ENCODE measurements at regions of chr3 and their contacts with region 1.

Region 1: GRCh38 chr3:192566706-192567290 is 160.5 kb downstream of the FGF12 start:
- DNase-seq: peak; percentile 83
- ATAC-seq: peak; percentile 83
- H3K4me3 Mint-ChIP-seq: no peak overlapping the region
- H3K27ac Mint-ChIP-seq: no peak overlapping the region
- H3K4me1 Mint-ChIP-seq: peaks cover 7% of the 10 kb centered on the region
- H3K27me3 Mint-ChIP-seq: peaks cover 16% of the 10 kb centered on the region

Region 2: GRCh38 chr3:192467230-192468140 is 99.3 kb before region 1 on chr3:
- CTCF ChIA-PET with region 1: no interaction called
- POLR2A ChIA-PET with region 1: no interaction called
- intact Hi-C with region 1: loop called in 1 of 2 experiments (anchors 1 kb)
- DNase-seq: peak; percentile 66
- ATAC-seq: peak; percentile 79
- H3K4me3 Mint-ChIP-seq: no peak overlapping the region
- H3K27ac Mint-ChIP-seq: no peak overlapping the region
- H3K4me1 Mint-ChIP-seq: no peaks in the 10 kb centered on the region
- H3K27me3 Mint-ChIP-seq: peaks cover 27% of the 10 kb centered on the region

Region 3: GRCh38 chr3:192802957-192803899 is 236.4 kb after region 1 on chr3:
- CTCF ChIA-PET with region 1: interaction called, 3 read pairs
- POLR2A ChIA-PET with region 1: no interaction called
- intact Hi-C with region 1: loop called (anchors 1 kb)
- DNase-seq: no peak
- ATAC-seq: peak; percentile 36
- H3K4me3 Mint-ChIP-seq: no peak overlapping the region
- H3K27ac Mint-ChIP-seq: no peak overlapping the region
- H3K4me1 Mint-ChIP-seq: no peaks in the 10 kb centered on the region
- H3K27me3 Mint-ChIP-seq: peaks cover 2% of the 10 kb centered on the region